Dendritic cell treated with granulocyte-macrophage colony-stimulating factor and Interleukin-4, amounts not matched to agents 40 ng/mL and 50 ng/mL, for 4 days (primary cell): ENCODE measurements at regions of chr11 and their contacts with region 1.

Region 1: DNA sequence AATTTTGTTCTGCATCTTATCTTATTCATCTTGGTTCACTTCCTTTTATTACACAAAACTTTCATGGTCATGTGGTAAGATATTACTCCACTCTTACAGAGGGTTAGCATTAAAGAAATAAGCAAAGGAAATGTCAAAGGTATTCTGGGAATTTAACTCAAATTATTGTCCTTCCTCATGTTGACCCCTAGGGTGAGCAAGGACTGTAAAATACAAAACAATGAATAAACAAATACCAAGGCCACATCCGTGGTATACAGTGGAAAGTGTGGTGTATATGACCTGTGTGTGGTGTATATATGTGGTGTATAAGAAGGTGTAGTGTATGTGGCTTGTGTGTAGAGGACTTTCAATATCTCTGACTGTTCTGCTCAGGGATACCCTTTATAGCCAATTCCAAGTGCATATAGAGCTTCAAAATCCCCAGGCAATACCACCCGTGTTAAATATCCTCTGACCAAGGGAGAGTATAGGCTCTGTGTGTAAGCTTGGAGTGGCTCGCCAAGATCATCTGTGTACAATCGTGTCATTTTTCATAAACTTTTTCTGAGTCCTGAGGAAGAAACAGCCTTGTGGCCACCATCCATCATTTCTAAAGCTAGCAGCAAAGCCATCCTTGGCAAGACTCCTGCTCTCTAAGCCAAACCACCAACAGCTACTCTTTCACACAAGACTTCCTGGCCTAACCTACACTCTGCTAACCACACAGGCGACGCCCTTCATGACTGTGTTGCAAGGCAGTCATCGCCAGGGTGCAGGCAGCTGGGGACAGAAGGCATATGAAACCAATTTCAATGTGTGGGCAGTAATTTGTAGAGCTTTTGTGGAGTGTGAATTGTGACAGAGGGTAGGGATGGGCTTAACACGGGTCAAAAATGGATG is 548.0 kb downstream of the ETS1 start:
- H3K4me3 Mint-ChIP-seq: no peak overlapping the region
- H3K27ac Mint-ChIP-seq: peak overlapping the region; percentile 44
- H3K4me1 Mint-ChIP-seq: peaks cover 32% of the 10 kb centered on the region
- H3K27me3 Mint-ChIP-seq: no peaks in the 10 kb centered on the region

Region 2: GRCh38 chr11:128624269-128625175 is 585.1 kb after region 1 on chr11:
- intact Hi-C with region 1: loop called (anchors 10 kb)
- H3K4me3 Mint-ChIP-seq: no peak overlapping the region
- H3K27ac Mint-ChIP-seq: no peak overlapping the region
- H3K4me1 Mint-ChIP-seq: peaks cover 25% of the 10 kb centered on the region
- H3K27me3 Mint-ChIP-seq: peaks cover 13% of the 10 kb centered on the region

Region 3: DNA sequence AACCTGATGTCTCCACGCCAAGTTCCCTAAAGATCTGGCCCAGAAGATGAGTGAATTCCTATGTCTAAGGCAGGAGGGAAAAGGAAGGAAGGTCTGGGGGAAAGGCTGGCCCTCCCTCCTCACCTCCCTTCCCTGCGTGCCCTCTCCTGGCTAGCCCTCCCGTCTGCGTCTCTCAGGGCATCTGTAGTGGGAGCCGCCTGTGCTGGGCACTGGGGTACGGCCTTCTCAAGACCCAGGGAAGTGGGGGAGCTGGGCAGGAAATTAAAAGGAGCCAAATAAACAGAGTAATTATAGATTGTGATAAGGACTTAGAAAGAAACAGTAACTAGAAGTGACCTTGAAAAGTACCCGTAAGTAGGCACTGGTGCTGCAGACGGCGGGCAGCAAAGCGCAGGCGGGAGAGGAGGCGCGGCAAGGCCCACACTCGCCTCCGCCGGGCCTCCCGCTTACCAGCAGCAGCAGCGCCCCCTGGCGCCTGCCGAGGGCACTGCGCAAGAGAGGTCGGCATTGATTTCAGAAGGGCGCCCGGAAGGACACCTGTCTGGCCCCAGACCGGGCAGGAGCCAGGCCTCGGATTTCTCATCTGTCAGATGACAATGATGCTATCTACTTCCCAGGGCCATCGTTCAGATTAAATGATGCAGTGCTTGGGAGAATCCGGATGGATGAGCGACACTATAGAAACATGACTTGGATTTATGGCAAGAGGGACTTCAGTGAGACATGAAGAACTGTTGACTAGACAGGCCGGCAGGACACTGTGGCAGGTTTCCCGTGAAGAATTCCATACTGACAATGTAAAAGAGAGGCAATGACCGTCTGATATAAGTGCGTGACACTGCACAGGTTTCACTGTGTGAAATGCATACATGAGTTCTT is 820.4 kb after region 1 on chr11:
- intact Hi-C with region 1: loop called (anchors 5 kb)
- H3K4me3 Mint-ChIP-seq: no peak overlapping the region
- H3K27ac Mint-ChIP-seq: no peak overlapping the region
- H3K4me1 Mint-ChIP-seq: peaks cover 7% of the 10 kb centered on the region
- H3K27me3 Mint-ChIP-seq: peaks cover 17% of the 10 kb centered on the region